IMR-90 (cell line): ENCODE measurements at regions of chr22 and their contacts with region 1.

Region 1: GRCh38 chr22:40436505-40437451 is 66.4 kb downstream of the SGSM3 start:
- DNase-seq: peak; percentile 74
- ATAC-seq: peak; percentile 64
- H3K4me3 ChIP-seq: peak overlapping the region; percentile 16; the same call in 1 of the 2 replicates
- H3K27ac ChIP-seq: peak overlapping the region; percentile 76
- H3K4me1 ChIP-seq: peaks cover 24% of the 10 kb centered on the region
- H3K27me3 ChIP-seq: no peaks in the 10 kb centered on the region
- CTCF ChIP-seq: peak; percentile 62
- POLR2A ChIP-seq: no peak
- RAD21 ChIP-seq: peak; percentile 57

Region 2: DNA sequence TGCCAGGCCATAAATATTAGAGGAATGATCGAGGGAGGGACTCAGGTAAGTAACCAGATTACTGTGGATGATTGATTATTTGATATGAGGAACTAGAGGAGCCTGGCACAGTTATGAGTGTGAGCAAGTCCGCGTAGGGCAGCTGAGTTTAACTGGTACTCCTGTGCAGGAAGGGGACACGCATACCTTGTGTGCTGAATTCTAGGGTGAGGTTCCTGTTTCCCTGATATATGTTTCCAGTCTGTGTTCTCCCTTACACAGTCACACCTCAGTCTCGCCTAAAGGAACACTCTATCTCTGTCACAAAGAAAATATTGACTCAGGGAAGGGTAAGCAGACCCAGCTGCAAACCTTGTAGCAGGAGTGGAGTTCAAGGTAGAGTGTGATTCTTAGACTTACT is 49.0 kb before region 1 on chr22:
- CTCF ChIA-PET with region 1: no interaction called
- POLR2A ChIA-PET with region 1: no interaction called
- dilution Hi-C with region 1: no loop called
- in situ Hi-C with region 1: no loop called
- intact Hi-C with region 1: no loop called
- DNase-seq: no peak
- ATAC-seq: no peak
- H3K4me3 ChIP-seq: no peak overlapping the region
- H3K27ac ChIP-seq: no peak overlapping the region
- H3K4me1 ChIP-seq: peaks cover 2% of the 10 kb centered on the region
- H3K27me3 ChIP-seq: no peaks in the 10 kb centered on the region
- CTCF ChIP-seq: no peak
- POLR2A ChIP-seq: no peak
- RAD21 ChIP-seq: no peak

Region 3: DNA sequence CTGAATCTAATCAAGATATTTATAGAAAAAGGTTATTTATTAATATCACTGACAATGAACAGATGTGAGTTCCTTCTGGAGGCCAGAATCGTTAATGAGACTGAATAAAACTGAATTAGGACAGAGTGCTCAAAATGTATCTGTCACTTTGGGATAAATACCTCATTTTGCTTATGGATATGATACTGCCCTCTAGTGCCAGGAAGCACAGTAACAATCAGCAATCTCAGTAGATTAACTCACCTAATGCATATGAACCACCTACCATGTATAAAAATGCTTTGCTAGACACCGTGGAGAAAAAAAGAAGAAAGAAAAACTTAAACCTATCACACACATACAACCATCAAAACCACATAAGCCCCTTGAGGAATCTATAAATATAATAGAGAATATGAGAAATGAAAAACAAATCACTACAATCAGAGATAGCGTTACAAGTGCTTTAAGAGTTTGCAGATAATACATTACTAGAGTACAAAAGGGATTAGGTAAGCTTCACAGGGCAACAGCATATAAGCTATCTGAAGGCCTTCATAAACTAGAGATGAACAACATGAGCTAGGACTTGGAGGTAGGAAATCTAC is 51.0 kb after region 1 on chr22:
- CTCF ChIA-PET with region 1: interaction called, 9 read pairs
- POLR2A ChIA-PET with region 1: no interaction called
- dilution Hi-C with region 1: no loop called
- in situ Hi-C with region 1: no loop called
- intact Hi-C with region 1: loop called (anchors 2 kb)
- DNase-seq: peak; percentile 47
- ATAC-seq: no peak
- H3K4me3 ChIP-seq: no peak overlapping the region
- H3K27ac ChIP-seq: no peak overlapping the region
- H3K4me1 ChIP-seq: peaks cover 26% of the 10 kb centered on the region
- H3K27me3 ChIP-seq: no peaks in the 10 kb centered on the region
- CTCF ChIP-seq: peak; percentile 69
- POLR2A ChIP-seq: no peak
- RAD21 ChIP-seq: peak; percentile 58

Region 4: GRCh38 chr22:40560551-40560950 is 123.8 kb after region 1 on chr22:
- CTCF ChIA-PET with region 1: no interaction called
- POLR2A ChIA-PET with region 1: no interaction called
- dilution Hi-C with region 1: no loop called
- in situ Hi-C with region 1: no loop called
- intact Hi-C with region 1: no loop called
- DNase-seq: peak; percentile 65
- ATAC-seq: peak; percentile 78
- H3K4me3 ChIP-seq: no peak overlapping the region
- H3K27ac ChIP-seq: no peak overlapping the region
- H3K4me1 ChIP-seq: peaks cover 2% of the 10 kb centered on the region; the same call in 1 of the 2 replicates
- H3K27me3 ChIP-seq: no peaks in the 10 kb centered on the region
- CTCF ChIP-seq: no peak
- POLR2A ChIP-seq: no peak
- RAD21 ChIP-seq: no peak

Region 5: DNA sequence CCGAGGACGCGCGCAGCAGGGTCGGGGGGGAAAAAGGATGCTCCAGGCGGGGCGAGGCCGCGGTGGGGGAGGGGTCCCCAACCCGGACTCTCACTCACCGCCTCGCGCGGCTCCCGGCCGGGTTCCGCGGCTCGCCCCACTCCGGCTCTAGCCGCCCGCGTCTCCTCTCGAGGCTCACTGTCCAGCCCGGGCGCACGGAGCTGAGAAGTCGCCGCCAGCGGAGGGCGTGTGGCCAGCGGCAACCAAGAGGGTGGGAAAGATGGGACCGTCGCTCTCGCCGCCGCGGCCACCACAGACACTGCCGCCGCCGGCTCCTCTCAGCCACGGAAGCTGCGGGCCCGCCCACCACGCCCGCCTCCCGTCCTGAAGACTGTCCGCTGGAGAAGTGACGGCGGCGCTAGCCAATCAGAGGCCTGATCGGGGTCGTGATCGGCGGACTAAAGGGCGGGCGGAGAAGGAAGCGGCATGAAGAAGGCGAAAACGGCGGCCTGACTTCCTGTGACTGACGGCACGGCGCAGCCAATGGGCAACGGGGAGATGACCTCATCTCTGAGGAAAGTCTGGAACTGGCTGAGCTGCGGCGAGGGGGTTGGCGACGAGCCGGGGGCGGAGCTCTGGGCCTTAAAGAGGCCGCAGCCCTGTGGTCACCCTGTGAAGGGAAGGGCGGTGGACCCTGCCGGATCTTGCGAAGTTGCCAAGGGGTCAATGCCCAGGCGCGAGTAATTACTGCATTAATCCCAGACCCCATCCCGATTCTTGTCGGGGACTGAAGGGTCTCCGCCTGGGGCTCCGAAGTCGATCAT is 199.8 kb after region 1 on chr22 and contains the start of gene MRTFA:
- CTCF ChIA-PET with region 1: interaction called, 6 read pairs
- POLR2A ChIA-PET with region 1: no interaction called
- dilution Hi-C with region 1: no loop called
- in situ Hi-C with region 1: loop called (anchors 5 kb)
- intact Hi-C with region 1: loop called (anchors 2 kb)
- DNase-seq: peak; percentile 100
- ATAC-seq: peak; percentile 94
- H3K4me3 ChIP-seq: peak within 1 kb of the TSS; percentile 69
- H3K27ac ChIP-seq: peak within 1 kb of the TSS; percentile 86
- H3K4me1 ChIP-seq: peaks cover 9% of the 10 kb centered on the region
- H3K27me3 ChIP-seq: no peaks in the 10 kb centered on the region
- CTCF ChIP-seq: no peak
- POLR2A ChIP-seq: peak; percentile 96
- RAD21 ChIP-seq: no peak
- total RNA-seq, gene MRTFA: 12.5 and 15.3 TPM in 2 replicates

Region 6: DNA sequence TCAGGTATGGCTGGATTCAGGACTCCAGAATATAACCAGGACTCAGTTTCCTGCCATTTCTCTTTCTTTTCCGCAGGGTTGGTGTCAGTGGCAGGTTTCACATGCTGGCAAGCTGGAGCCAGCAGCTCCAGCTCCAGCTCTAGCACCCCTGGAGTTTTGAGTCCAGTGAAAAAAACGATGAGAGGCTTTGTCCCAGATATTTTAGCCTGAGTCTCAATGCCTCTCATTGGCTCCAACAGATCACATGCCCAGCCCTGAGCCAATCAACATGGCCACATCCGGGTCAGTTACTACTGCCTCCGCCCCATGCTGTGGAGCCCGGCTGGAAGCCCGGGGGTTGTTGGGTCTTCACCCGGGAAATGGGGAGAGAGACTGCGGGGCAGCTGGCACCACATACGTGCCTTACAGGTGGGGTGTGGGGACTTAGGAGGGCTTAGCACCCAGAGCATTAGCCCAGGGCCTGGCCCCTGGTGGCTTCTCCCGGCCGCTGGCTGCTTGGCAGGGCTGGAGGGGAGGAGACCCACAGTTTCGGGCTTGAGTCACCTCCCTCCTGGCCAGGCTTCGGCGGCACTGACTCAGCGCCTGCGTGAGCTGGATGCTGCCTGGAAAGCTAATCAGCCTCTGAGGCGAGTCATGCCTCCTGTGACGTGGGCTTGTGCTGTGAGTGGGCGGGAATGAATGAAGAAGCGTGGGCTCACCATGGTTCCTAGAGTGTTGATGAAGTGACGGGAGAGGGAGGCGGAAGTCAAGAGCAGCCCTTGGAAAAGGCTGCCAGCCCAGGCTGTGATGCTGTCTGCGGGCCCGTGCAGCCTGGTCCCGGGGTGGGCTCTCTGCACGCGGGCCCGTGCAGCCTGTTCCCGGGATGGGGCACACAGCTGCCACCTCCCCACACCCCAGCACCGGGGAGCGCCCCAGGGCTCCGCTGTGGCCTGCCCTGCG is 215.1 kb after region 1 on chr22:
- CTCF ChIA-PET with region 1: interaction called, 27 read pairs
- POLR2A ChIA-PET with region 1: interaction called, 13 read pairs
- dilution Hi-C with region 1: no loop called
- in situ Hi-C with region 1: no loop called
- intact Hi-C with region 1: no loop called
- DNase-seq: peak; percentile 100
- ATAC-seq: peak; percentile 94
- H3K4me3 ChIP-seq: peak overlapping the region; percentile 59
- H3K27ac ChIP-seq: peak overlapping the region; percentile 93
- H3K4me1 ChIP-seq: peaks cover 13% of the 10 kb centered on the region
- H3K27me3 ChIP-seq: no peaks in the 10 kb centered on the region
- CTCF ChIP-seq: no peak
- POLR2A ChIP-seq: peak; percentile 90
- RAD21 ChIP-seq: peak; percentile 13; the same call in 1 of the 2 replicates

Region 7: DNA sequence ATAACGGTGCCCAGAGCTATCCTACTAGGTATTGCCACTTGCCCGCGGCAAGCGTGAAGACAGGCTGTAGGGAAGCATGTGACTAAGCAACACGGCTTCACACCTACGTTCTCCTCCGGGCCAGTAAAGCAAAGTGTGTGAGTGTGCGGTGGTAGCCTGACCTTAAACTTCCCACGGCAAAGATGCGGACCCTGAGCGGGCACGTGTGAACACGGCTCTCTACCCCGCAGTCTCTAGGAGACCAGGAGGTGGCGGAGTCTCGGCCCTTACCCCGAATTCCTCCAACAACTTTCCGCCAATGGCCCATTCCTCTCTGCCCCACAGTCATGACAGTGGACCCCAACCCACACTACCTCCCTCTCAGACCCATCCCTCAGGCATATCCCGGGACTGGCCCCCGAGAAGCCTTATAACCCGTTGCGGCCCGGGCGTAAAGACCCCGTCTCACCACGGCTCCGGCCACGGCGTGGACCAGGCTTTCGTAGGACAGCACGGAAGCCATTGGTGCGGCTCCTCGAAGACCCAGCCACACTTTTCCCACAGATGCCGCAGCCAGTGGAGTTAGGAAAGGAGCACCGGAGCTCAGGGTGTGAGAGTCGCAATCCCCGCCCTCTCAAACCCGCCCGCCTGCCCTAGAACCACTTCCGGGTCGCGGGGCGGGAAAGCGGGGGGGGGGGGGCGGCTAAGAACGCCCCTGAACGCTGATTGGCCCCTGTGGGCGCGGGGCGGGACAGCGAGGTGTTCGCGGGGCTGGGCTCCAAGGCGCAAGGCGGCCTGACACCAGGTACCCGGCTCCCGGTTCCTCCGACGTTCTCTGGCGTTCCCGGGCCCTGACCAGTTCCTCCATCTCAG is 382.2 kb after region 1 on chr22 and contains the start of gene SLC25A17:
- CTCF ChIA-PET with region 1: no interaction called
- POLR2A ChIA-PET with region 1: no interaction called
- dilution Hi-C with region 1: no loop called
- in situ Hi-C with region 1: no loop called
- intact Hi-C with region 1: no loop called
- DNase-seq: peak; percentile 69
- ATAC-seq: peak; percentile 97
- H3K4me3 ChIP-seq: peak within 1 kb of the TSS; percentile 90
- H3K27ac ChIP-seq: peak within 1 kb of the TSS; percentile 74
- H3K4me1 ChIP-seq: no peaks in the 10 kb centered on the region
- H3K27me3 ChIP-seq: no peaks in the 10 kb centered on the region
- CTCF ChIP-seq: peak; percentile 38
- POLR2A ChIP-seq: peak; percentile 65
- RAD21 ChIP-seq: peak; percentile 16; the same call in 1 of the 2 replicates
- total RNA-seq, gene SLC25A17: 31.7 and 36.0 TPM in 2 replicates

Region 8: GRCh38 chr22:40898850-40899357 is 462.1 kb after region 1 on chr22:
- CTCF ChIA-PET with region 1: no interaction called
- POLR2A ChIA-PET with region 1: no interaction called
- dilution Hi-C with region 1: no loop called
- in situ Hi-C with region 1: loop called (anchors 25 kb)
- intact Hi-C with region 1: loop called (anchors 2 kb)
- DNase-seq: peak; percentile 67
- ATAC-seq: peak; percentile 88
- H3K4me3 ChIP-seq: no peak overlapping the region
- H3K27ac ChIP-seq: no peak overlapping the region
- H3K4me1 ChIP-seq: no peaks in the 10 kb centered on the region
- H3K27me3 ChIP-seq: no peaks in the 10 kb centered on the region
- CTCF ChIP-seq: peak; percentile 66
- POLR2A ChIP-seq: no peak
- RAD21 ChIP-seq: peak; percentile 77